Naive thymus-derived CD8-positive, alpha-beta T cell (primary cell): ENCODE measurements at regions of chr13 and their contacts with region 1.

Region 1: DNA sequence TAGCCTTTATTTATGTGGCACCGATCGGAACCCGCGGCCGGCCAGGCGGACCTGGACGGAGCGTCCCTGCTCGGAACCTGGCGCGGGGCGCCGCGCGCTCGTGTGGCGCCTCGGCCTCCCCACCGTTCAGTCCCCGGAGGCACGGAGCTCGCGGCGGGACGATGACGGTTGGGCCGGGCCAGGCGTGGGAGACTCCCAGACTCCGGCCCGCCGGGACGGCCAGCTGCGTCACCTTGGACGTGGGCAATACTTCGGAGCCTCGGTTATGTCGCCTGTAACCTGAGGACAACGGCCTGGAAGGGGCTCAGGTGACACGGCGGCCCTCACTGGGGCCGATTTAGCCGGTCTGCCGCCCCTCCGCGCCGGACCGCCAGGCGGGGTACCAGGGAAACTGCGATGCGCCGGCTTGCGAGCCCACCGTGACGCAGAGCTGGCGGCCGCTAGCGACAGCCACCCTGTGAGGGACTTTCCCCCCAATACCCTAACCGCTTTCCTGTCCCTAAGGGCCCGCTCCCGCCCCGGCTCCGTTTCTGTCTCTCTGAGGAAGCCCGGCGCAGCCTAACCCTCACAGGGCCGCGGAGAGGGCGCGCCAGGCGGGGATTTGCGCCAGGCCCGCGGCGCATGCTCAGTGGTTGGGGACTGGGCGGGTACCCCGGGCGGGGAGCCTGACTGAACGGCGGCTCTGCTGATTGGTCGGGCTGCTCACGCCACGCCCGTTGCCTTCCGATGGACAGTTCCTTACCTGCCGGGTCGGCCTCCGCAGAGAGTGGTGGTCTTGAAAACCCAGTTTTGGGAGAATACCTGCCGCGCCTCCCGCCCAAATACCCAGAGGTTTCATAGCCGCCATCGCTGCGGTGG is 109.5 kb upstream of the DOCK9 start:
- DNase-seq: peak; percentile 90 to 95 (median 92)
- ATAC-seq: peak; percentile 76 to 77
- H3K4me3 Mint-ChIP-seq: peak overlapping the region; percentile 97 to 99 (median 99)
- H3K27ac Mint-ChIP-seq: peak overlapping the region; percentile 97 to 100 (median 99)
- H3K4me1 Mint-ChIP-seq: peaks cover 33 to 44% (median 37%) of the 10 kb centered on the region in 4 donors
- H3K27me3 Mint-ChIP-seq: peaks cover 0 to 8% (median 0%) of the 10 kb centered on the region in 5 donors

Region 2: DNA sequence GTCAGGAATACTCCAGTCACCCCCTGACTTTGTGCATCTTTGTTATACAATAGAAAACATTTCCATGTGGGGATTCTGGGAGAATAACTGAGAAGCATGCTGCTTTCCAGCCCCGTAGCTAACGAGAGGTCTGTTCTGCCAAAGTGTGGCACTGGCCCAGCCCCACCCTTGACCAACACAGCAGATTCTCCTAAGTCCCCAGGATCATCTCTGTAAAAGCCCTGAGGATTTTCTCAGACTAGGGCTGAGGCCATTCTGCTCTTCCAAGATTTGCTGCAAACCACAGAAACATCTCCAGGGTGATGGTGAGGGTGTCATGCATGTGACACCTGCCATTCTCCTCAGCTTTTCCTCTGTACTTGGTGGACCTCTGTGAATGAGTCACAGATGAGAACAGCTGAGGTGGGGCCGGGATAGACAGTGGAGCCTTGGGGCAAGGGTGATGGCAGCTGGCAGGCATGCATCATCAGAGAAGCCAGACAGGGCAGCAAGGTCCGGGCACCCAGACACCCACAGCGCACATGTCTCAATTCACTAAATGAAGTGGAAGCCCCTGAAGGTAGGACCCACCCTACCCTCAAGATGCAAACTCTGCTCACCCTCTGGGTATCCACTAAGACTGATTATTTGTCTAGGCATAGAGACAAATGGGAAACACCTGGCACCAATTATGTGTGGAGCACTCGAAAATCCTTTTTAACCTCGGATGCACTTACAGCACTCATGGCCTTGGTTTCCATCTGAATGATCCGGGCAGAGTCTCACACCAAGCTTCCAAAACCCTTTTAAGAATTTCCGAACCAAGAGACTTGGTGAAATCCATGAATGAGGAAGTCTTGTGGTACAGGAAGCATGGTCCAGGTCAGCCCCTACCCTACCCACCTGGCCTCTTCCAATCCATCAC is 89.3 kb before region 1 on chr13:
- POLR2A ChIA-PET with region 1: interaction called, 12 read pairs
- DNase-seq: no peak
- ATAC-seq: no peak
- H3K4me3 Mint-ChIP-seq: peak overlapping the region in 9 of 10 donors; percentile 11 to 84 (median 69)
- H3K27ac Mint-ChIP-seq: peak overlapping the region; percentile 89 to 99 (median 94)
- H3K4me1 Mint-ChIP-seq: peaks cover 50 to 98% (median 90%) of the 10 kb centered on the region in 4 donors
- H3K27me3 Mint-ChIP-seq: no peaks in the 10 kb centered on the region

Region 3: GRCh38 chr13:99033814-99034213 is 53.5 kb before region 1 on chr13:
- POLR2A ChIA-PET with region 1: interaction called, 10 read pairs
- DNase-seq: peak in 2 of 10 donors; percentile 39 to 46
- ATAC-seq: peak; percentile 73 to 79
- H3K4me3 Mint-ChIP-seq: no peak overlapping the region
- H3K27ac Mint-ChIP-seq: peak overlapping the region in 8 of 10 donors; percentile 7 to 71 (median 46)
- H3K4me1 Mint-ChIP-seq: peaks cover 20 to 49% (median 40%) of the 10 kb centered on the region in 4 donors
- H3K27me3 Mint-ChIP-seq: peaks cover 0 to 12% (median 0%) of the 10 kb centered on the region in 5 donors

Region 4: GRCh38 chr13:99041788-99042187 is 45.5 kb before region 1 on chr13:
- POLR2A ChIA-PET with region 1: interaction called, 194 read pairs
- DNase-seq: no peak
- ATAC-seq: no peak
- H3K4me3 Mint-ChIP-seq: peak overlapping the region in 1 of 10 donors; percentile 13
- H3K27ac Mint-ChIP-seq: peak overlapping the region in 8 of 10 donors; percentile 53 to 98 (median 88)
- H3K4me1 Mint-ChIP-seq: peaks cover 37 to 72% (median 67%) of the 10 kb centered on the region in 4 donors
- H3K27me3 Mint-ChIP-seq: peaks cover 0 to 17% (median 0%) of the 10 kb centered on the region in 5 donors

Region 5: GRCh38 chr13:99075268-99076191 is 11.8 kb before region 1 on chr13:
- POLR2A ChIA-PET with region 1: interaction called, 14 read pairs
- DNase-seq: peak in 3 of 10 donors; percentile 46 to 54 (median 51)
- ATAC-seq: peak; percentile 75 to 82
- H3K4me3 Mint-ChIP-seq: peak overlapping the region; percentile 50 to 82 (median 71)
- H3K27ac Mint-ChIP-seq: peak overlapping the region; percentile 76 to 98 (median 92)
- H3K4me1 Mint-ChIP-seq: peaks cover 41 to 95% (median 86%) of the 10 kb centered on the region in 4 donors
- H3K27me3 Mint-ChIP-seq: peaks cover 0 to 4% (median 0%) of the 10 kb centered on the region in 5 donors

Region 6: DNA sequence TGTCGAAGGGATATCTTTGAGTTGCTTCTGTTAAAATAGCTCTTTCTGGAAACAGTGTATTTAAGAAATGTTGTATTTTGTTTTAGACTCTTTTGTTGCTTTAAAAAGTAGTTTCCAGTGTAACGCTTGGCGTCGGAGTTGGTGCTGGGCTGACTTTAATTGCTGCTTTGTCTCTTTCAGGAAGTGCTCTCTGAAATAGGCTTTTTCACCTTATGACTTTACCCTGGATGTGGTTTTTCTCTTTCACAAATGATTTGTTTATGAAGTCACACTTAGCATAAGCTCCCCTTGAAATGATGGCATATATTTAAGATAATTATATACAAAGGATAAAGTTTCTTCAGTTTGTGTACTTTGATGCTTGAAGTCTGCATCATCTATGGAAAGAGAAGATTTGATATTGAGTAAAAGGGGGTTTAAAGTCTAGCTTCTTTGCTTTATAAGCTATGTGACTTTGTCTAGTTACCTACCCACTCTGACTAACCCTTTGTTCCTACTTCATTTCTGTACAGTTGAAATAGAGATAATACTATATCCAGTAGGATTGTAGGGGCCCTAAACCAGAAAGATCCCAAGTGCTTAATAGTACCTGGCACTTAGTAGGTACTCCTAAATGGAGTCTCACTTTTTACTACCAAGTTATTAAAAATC is 171.0 kb after region 1 on chr13 and contains the start of gene GPR18:
- POLR2A ChIA-PET with region 1: interaction called, 13 read pairs
- DNase-seq: peak in 6 of 10 donors; percentile 17 to 78 (median 63)
- ATAC-seq: peak; percentile 74 to 81
- H3K4me3 Mint-ChIP-seq: peak within 1 kb of the TSS; percentile 87 to 98 (median 94)
- H3K27ac Mint-ChIP-seq: peak within 1 kb of the TSS; percentile 90 to 99 (median 98)
- H3K4me1 Mint-ChIP-seq: peaks cover 29 to 87% (median 74%) of the 10 kb centered on the region in 4 donors
- H3K27me3 Mint-ChIP-seq: no peaks in the 10 kb centered on the region
- polyA plus RNA-seq, gene GPR18: 22.2 to 37.0 (median 26.1) TPM

Region 7: GRCh38 chr13:99459099-99459850 is 371.9 kb after region 1 on chr13:
- POLR2A ChIA-PET with region 1: no interaction called
- DNase-seq: no peak
- ATAC-seq: no peak
- H3K4me3 Mint-ChIP-seq: no peak overlapping the region
- H3K27ac Mint-ChIP-seq: peak overlapping the region in 1 of 10 donors; percentile 9
- H3K4me1 Mint-ChIP-seq: peaks cover 4 to 26% (median 16%) of the 10 kb centered on the region in 4 donors
- H3K27me3 Mint-ChIP-seq: peaks cover 0 to 3% (median 0%) of the 10 kb centered on the region in 5 donors